ENCODE measurements at regions of chr12 and their contacts with region 1.

Region 1: GRCh38 chr12:98725476-98726247 is 80.6 kb downstream of the APAF1 start:
- DNase-seq: peak; percentile 64
- H3K4me3 Mint-ChIP-seq: no peak overlapping the region
- H3K27ac Mint-ChIP-seq: peak overlapping the region; percentile 69
- H3K4me1 Mint-ChIP-seq: peaks cover 18% of the 10 kb centered on the region
- H3K27me3 Mint-ChIP-seq: no peaks in the 10 kb centered on the region

Region 2: DNA sequence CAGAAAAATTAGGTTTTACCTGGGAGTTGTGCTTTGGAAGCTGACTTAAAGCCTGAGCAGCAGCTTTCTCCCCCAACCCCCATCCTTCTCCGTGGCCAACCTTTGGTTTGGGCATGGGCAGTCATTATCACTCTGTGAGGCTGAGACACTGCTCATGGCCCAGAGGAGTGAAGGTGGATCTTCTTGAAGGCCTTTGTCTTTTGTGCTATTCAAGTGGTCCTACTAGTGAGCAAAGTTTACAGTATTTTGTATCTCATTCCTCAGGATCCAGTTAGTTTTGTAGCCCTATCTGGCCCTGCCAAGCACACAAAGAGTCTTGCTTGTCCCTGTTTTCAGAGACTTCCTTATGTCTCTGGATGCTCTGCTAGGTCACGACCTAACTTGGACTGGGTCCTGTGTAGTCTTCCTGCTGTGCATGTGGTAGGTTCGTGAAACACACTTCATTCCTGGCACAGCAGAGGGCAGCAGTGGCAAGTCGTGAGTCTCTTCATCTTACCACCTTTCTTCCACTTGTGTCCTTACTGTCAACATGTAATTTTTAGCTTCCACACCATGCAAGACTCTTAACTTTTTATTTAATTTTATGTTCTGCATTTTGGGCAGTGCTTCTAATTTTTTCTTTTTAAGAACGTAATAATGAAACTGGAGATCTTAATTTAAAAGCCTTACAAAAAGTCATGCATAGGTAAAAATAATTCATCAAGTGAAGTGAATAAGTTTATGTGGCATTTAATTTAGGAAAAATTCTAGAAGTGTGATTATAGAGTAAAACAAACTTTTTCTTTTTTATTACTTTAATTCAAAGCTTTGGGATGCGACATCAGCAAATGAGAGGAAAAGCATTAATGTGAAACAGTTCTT is 26.8 kb before region 1 on chr12:
- CTCF ChIA-PET with region 1: no interaction called
- POLR2A ChIA-PET with region 1: no interaction called
- DNase-seq: peak; percentile 62
- H3K4me3 Mint-ChIP-seq: no peak overlapping the region
- H3K27ac Mint-ChIP-seq: no peak overlapping the region
- H3K4me1 Mint-ChIP-seq: peaks cover 9% of the 10 kb centered on the region
- H3K27me3 Mint-ChIP-seq: no peaks in the 10 kb centered on the region

Region 3: GRCh38 chr12:98743347-98743953 is 17.8 kb after region 1 on chr12:
- CTCF ChIA-PET with region 1: interaction called, 34 read pairs
- POLR2A ChIA-PET with region 1: interaction called, 5 read pairs
- DNase-seq: peak; percentile 63
- H3K4me3 Mint-ChIP-seq: no peak overlapping the region
- H3K27ac Mint-ChIP-seq: peak overlapping the region; percentile 60
- H3K4me1 Mint-ChIP-seq: peaks cover 48% of the 10 kb centered on the region
- H3K27me3 Mint-ChIP-seq: peaks cover 11% of the 10 kb centered on the region

Region 4: DNA sequence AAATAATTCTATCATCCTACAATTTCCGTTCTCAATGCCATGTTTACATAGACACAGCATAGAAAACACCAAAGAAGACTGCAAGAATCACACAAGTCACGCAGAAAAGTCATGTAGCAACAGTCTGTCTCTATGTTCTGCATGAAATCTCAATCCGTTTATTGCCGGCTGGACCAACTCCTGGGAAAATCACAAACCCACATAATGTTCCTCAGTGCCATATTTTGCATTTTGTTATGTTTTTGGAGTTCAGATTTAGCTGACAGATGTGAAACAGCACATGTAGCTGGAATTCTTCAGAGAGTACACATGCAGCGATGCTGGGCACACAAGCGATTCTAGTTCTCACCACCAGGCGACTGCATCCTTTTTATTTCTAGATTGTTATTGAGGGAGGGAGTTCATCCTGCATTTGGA is 112.6 kb after region 1 on chr12:
- CTCF ChIA-PET with region 1: no interaction called
- POLR2A ChIA-PET with region 1: no interaction called
- DNase-seq: no peak
- H3K4me3 Mint-ChIP-seq: no peak overlapping the region
- H3K27ac Mint-ChIP-seq: no peak overlapping the region
- H3K4me1 Mint-ChIP-seq: peaks cover 1% of the 10 kb centered on the region
- H3K27me3 Mint-ChIP-seq: peaks cover 37% of the 10 kb centered on the region

Region 5: GRCh38 chr12:98973395-98973794 is 247.7 kb after region 1 on chr12:
- CTCF ChIA-PET with region 1: no interaction called
- POLR2A ChIA-PET with region 1: no interaction called
- DNase-seq: no peak
- H3K4me3 Mint-ChIP-seq: no peak overlapping the region
- H3K27ac Mint-ChIP-seq: no peak overlapping the region
- H3K4me1 Mint-ChIP-seq: no peaks in the 10 kb centered on the region
- H3K27me3 Mint-ChIP-seq: no peaks in the 10 kb centered on the region

Region 6: GRCh38 chr12:98998697-98999299 is 273.1 kb after region 1 on chr12:
- CTCF ChIA-PET with region 1: interaction called, 13 read pairs
- POLR2A ChIA-PET with region 1: no interaction called
- DNase-seq: no peak
- H3K4me3 Mint-ChIP-seq: no peak overlapping the region
- H3K27ac Mint-ChIP-seq: no peak overlapping the region
- H3K4me1 Mint-ChIP-seq: no peaks in the 10 kb centered on the region
- H3K27me3 Mint-ChIP-seq: peaks cover 14% of the 10 kb centered on the region

Measured in activated CD4-positive, alpha-beta memory T cell treated with anti-CD3 and anti-CD28 coated beads, Interleukin-2, amount 10 ng/mL, durations not matched to agents 7 days and 5 days (primary cell).